Activated CD4-positive, alpha-beta memory T cell treated with anti-CD3 and anti-CD28 coated beads for 36 hours (primary cell): ENCODE measurements at regions of chr1 and their contacts with region 1.

Region 1: GRCh38 chr1:160193091-160193819 is 2.9 kb downstream of the CASQ1 start:
- DNase-seq: peak; percentile 86
- H3K4me3 Mint-ChIP-seq: no peak overlapping the region
- H3K27ac Mint-ChIP-seq: no peak overlapping the region
- H3K4me1 Mint-ChIP-seq: no peaks in the 10 kb centered on the region
- H3K27me3 Mint-ChIP-seq: no peaks in the 10 kb centered on the region

Region 2: GRCh38 chr1:159282118-159282517 is 911.1 kb before region 1 on chr1:
- CTCF ChIA-PET with region 1: no interaction called
- POLR2A ChIA-PET with region 1: no interaction called
- intact Hi-C with region 1: no loop called
- DNase-seq: no peak
- H3K4me3 Mint-ChIP-seq: no peak overlapping the region
- H3K27ac Mint-ChIP-seq: no peak overlapping the region
- H3K4me1 Mint-ChIP-seq: no peaks in the 10 kb centered on the region
- H3K27me3 Mint-ChIP-seq: peaks cover 14% of the 10 kb centered on the region

Region 3: DNA sequence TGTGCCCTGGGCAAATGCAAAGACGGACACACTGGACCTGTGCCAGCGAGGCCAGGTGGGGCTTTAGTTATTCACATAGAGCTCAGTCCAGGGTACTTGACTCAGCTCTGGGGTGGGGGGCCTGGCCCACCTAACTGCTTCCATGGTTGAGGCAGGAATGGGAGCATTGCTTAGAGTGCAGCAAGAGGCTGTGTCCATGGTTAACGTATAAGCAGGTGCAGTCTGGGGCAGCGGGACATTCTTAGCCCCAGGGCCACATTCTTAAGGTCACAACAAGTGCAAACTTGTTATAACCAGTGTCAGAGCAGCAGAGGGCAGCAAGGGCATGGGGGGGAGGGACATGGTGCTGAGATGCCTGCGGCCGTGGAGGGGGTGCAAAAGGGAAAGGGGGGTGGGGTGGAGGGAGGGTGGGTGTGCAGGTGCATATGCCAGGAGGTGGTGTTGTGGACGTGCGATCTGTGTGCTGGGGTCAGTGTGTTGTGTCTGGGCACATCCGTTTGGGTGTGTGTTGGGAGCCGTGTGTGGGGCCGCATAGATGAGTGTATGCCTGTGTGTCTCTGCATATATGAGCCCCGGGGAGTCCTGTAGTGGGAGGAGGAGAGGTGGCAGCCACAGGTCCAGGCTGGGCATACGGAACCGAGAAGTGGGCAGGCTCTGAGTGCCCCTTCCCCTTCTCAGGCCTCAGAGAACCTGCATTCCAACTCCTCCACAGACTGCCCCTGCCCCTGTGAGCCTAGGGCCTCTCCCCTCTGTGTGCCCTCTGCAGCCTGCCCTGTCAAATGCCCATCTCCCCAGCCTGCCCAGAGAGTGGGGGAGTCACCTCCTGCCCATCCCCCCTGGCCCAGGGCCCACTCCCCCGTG is 131.7 kb before region 1 on chr1:
- CTCF ChIA-PET with region 1: no interaction called
- POLR2A ChIA-PET with region 1: no interaction called
- intact Hi-C with region 1: no loop called
- DNase-seq: no peak
- H3K4me3 Mint-ChIP-seq: no peak overlapping the region
- H3K27ac Mint-ChIP-seq: no peak overlapping the region
- H3K4me1 Mint-ChIP-seq: no peaks in the 10 kb centered on the region
- H3K27me3 Mint-ChIP-seq: peaks cover 12% of the 10 kb centered on the region

Region 4: GRCh38 chr1:160137216-160137862 is 55.9 kb before region 1 on chr1:
- CTCF ChIA-PET with region 1: no interaction called
- POLR2A ChIA-PET with region 1: no interaction called
- intact Hi-C with region 1: no loop called
- DNase-seq: no peak
- H3K4me3 Mint-ChIP-seq: no peak overlapping the region
- H3K27ac Mint-ChIP-seq: no peak overlapping the region
- H3K4me1 Mint-ChIP-seq: no peaks in the 10 kb centered on the region
- H3K27me3 Mint-ChIP-seq: peaks cover 10% of the 10 kb centered on the region

Region 5: GRCh38 chr1:160205242-160206035 is 12.2 kb after region 1 on chr1 and contains the start of gene PEA15:
- CTCF ChIA-PET with region 1: interaction called, 35 read pairs
- POLR2A ChIA-PET with region 1: no interaction called
- intact Hi-C with region 1: no loop called
- DNase-seq: peak; percentile 80
- H3K4me3 Mint-ChIP-seq: peak within 1 kb of the TSS; percentile 87
- H3K27ac Mint-ChIP-seq: peak within 1 kb of the TSS; percentile 82
- H3K4me1 Mint-ChIP-seq: peaks cover 54% of the 10 kb centered on the region
- H3K27me3 Mint-ChIP-seq: no peaks in the 10 kb centered on the region
- total RNA-seq, gene PEA15: 51.8 to 51.9 TPM

Region 6: DNA sequence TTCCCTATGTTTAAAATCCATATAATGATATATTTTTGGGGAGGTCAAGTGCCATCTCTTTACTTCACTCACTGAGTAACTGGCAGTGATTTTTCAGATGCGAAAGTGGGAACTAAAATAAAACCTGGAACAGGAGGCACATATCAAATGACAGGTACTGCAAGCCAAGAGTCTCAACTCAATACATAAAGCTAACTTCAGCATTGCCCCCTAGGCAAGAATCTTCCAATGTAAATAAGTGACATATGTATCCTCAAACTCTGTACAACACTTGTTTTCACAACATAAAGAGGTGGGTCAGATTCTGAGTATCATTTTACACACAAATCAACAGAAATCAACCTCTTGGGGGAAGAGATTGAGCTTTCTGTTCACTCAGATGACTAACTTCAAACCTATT is 51.0 kb after region 1 on chr1:
- CTCF ChIA-PET with region 1: interaction called, 10 read pairs
- POLR2A ChIA-PET with region 1: interaction called, 3 read pairs
- intact Hi-C with region 1: no loop called
- DNase-seq: no peak
- H3K4me3 Mint-ChIP-seq: no peak overlapping the region
- H3K27ac Mint-ChIP-seq: no peak overlapping the region
- H3K4me1 Mint-ChIP-seq: peaks cover 7% of the 10 kb centered on the region
- H3K27me3 Mint-ChIP-seq: no peaks in the 10 kb centered on the region

Region 7: DNA sequence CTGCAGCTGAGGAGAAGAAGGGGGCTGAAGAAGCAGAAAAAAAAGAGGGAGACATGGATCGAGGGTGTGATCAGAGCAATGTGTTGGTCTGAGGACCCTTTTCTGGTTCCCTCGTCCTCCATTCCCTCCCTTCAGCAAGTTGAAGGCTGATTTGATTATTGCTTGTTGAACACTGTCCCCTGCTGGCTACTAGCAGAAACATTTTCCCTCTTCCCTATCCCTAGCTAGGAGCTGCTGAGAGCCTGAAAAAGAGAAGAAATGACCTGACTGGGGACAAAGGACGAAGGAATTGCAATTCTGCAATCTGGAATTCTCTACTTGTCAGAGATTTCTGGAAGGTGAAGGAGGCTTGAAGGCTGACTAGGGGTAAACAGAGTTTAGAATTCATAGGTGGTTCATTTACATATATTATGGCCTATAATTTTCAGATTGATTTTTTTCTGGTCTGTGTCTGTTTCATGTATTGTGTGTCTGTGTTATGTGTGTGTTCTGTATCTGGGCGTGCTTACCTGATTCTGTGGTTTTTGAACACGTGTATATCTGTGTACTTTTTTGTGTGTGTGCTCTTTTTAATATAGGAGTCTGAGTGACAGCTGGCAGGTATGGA is 183.4 kb after region 1 on chr1:
- CTCF ChIA-PET with region 1: interaction called, 10 read pairs
- POLR2A ChIA-PET with region 1: no interaction called
- intact Hi-C with region 1: loop called (anchors 1 kb)
- DNase-seq: peak; percentile 33
- H3K4me3 Mint-ChIP-seq: no peak overlapping the region
- H3K27ac Mint-ChIP-seq: no peak overlapping the region
- H3K4me1 Mint-ChIP-seq: peaks cover 11% of the 10 kb centered on the region
- H3K27me3 Mint-ChIP-seq: no peaks in the 10 kb centered on the region